ENCODE measurements at regions of chr1 and their contacts with region 1.

Region 1: DNA sequence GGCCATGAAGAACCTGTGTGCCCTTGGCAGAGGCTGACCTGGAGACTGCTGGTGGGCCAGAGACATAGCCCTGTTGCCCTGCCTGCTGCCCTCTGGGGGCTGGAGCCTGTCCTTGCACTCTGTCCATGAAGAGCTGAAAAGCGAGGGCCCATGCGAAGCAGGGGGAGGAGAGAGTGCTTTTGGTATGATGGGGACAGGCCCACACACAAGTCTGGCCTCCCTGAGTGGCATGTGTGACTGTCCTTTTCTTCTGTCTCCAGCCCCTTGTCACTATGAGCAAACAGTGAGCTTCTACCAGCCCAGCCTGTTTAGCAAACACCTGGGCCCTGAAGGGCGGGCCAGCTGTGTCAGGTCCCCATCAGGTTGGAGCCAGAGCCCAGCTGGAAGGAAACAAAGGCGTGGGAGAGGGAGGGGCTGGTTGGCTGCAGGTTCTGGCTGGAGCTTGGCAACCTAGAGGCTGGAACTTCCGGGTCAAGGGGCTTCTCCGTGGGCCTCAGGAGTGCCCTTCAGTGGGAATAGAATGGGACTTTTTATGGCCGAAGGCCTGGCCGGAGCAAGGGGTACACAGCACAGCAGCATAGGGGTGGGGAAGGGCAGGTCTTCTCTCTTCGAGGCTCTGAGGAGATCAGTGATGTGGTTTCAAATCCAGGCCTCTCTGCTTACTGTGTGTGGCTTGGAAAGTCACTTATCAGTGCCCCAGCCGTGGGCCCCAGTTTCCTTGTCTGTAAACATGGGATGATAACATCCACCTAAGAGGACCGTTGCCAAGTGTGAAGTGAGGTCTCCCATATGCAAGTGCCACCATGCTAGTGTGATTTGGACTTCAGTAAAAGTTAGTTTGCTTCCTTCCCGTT is 14.3 kb downstream of the QSOX1 start:
- DNase-seq: peak; percentile 46
- H3K4me3 Mint-ChIP-seq: no peak overlapping the region
- H3K27ac Mint-ChIP-seq: no peak overlapping the region
- H3K4me1 Mint-ChIP-seq: no peaks in the 10 kb centered on the region
- H3K27me3 Mint-ChIP-seq: no peaks in the 10 kb centered on the region

Region 2: DNA sequence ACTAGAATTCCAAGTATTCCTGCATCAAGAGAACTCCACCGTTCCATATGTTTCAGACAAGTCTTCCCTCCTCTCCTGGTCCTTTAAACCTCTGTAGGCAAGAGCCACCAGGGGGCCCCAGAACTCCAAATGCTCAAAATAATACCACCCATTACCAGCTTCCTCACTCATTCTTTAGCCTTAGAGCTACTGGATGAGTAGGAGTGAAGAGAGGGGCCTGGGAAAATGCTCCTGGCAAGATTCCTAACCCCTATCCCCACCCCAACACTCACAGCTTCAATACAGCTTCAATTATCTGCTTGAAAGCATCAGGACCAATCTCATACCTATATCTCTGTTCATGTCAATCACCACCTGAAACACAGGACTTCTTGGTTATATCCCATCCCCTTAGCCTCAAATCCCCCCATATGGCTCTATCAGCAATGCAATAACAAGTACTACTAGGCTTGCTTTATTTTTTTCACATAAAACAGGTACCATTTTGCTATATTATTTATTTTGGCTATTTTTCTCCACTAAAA is 301.1 kb before region 1 on chr1:
- CTCF ChIA-PET with region 1: interaction called, 13 read pairs
- POLR2A ChIA-PET with region 1: no interaction called
- DNase-seq: peak; percentile 53
- H3K4me3 Mint-ChIP-seq: no peak overlapping the region
- H3K27ac Mint-ChIP-seq: no peak overlapping the region
- H3K4me1 Mint-ChIP-seq: peaks cover 8% of the 10 kb centered on the region
- H3K27me3 Mint-ChIP-seq: no peaks in the 10 kb centered on the region

Region 3: GRCh38 chr1:180154325-180155181 is 14.5 kb before region 1 on chr1 and contains the start of gene QSOX1:
- CTCF ChIA-PET with region 1: interaction called, 23 read pairs
- POLR2A ChIA-PET with region 1: interaction called, 4 read pairs
- DNase-seq: peak; percentile 92
- H3K4me3 Mint-ChIP-seq: peak within 1 kb of the TSS; percentile 92
- H3K27ac Mint-ChIP-seq: peak within 1 kb of the TSS; percentile 79
- H3K4me1 Mint-ChIP-seq: peaks cover 28% of the 10 kb centered on the region
- H3K27me3 Mint-ChIP-seq: no peaks in the 10 kb centered on the region
- total RNA-seq, gene QSOX1: 28.9 to 35.1 TPM

Region 4: DNA sequence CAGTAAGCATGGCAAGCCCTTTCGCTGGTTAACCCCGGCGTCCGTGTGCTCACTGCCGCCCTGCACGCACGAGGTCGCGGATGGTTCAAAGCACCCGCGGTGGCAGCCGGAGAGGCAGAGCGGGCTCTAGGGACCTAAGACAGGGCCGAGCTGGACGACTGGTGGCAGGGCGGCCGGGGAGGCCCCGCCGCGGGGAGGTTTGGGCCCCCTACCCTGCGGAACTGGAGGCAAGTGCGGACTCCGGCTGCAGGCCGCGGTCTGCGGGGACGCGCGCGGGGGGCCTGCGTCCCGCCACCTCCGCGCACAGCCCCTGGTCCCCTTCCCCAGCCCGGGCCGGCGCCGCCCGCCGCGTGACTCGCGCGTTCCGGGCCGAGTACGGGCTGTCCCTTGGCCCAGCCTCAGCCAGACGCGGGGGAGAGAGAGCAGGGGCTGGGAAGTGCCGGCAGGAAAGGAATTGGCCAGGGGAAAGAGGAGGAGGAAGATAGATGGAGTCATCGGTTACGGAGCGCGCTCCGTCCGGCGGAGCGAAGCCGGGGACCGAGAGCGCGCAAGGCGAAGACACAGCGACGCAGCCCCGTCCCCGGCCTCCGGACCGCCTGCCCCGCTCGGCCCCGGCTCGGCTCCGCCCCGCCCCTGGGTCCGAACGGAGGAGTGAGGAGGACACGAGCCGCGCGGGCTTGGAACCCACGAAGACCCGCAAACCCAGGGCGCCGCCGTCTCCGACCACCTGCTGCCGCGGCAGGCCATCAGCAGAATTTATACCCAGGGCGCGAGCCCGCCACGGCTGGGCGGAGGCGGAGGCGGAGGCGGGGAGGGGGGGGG is 60.4 kb after region 1 on chr1:
- CTCF ChIA-PET with region 1: no interaction called
- POLR2A ChIA-PET with region 1: no interaction called
- DNase-seq: peak; percentile 39
- H3K4me3 Mint-ChIP-seq: peak overlapping the region; percentile 48
- H3K27ac Mint-ChIP-seq: no peak overlapping the region
- H3K4me1 Mint-ChIP-seq: peaks cover 21% of the 10 kb centered on the region
- H3K27me3 Mint-ChIP-seq: peaks cover 76% of the 10 kb centered on the region

Region 5: DNA sequence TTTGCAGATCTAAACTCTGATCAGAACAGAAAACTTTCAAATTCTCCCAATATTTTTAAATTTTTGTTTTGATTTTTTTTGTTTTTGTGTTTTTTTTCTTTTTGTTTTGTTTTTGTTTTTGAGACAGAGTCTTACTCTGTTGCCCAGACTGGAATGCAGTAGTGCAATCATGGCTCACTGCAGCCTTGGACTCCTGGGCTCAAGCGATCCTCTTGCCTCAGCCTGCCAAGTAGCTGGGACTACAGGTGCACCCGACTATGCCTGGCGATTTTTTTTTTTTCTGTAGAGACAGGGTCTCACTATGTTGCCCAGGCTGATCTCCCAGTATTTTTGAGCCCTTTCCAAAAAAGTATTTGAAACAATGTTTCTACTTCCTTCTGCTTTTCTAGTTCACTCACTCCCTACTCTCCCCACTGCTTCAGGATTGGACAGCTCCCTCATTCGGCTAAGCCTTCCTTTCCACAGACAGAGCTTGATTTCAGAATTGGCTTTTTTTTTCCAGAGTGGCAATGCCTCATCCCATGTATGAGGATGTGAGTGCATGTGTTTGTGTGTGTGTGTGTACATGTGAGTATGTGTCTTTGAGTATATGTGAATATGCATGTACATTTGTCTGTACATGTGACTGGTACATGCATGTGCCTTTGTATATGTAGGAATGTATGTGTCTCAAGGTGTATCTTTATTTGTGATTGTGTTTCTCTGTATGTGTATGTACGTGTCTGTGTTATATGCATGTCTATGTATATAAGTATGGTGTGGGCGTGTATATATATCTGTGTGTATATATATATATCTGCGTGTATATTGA is 72.9 kb after region 1 on chr1:
- CTCF ChIA-PET with region 1: no interaction called
- POLR2A ChIA-PET with region 1: no interaction called
- DNase-seq: no peak
- H3K4me3 Mint-ChIP-seq: no peak overlapping the region
- H3K27ac Mint-ChIP-seq: no peak overlapping the region
- H3K4me1 Mint-ChIP-seq: peaks cover 1% of the 10 kb centered on the region
- H3K27me3 Mint-ChIP-seq: peaks cover 51% of the 10 kb centered on the region